Activated CD8-positive, alpha-beta T cell treated with anti-CD3 and anti-CD28 coated beads, Interleukin-2, amount 10 ng/mL, durations not matched to agents 7 days and 5 days (primary cell): ENCODE measurements at regions of chr22 and their contacts with region 1.

Region 1: DNA sequence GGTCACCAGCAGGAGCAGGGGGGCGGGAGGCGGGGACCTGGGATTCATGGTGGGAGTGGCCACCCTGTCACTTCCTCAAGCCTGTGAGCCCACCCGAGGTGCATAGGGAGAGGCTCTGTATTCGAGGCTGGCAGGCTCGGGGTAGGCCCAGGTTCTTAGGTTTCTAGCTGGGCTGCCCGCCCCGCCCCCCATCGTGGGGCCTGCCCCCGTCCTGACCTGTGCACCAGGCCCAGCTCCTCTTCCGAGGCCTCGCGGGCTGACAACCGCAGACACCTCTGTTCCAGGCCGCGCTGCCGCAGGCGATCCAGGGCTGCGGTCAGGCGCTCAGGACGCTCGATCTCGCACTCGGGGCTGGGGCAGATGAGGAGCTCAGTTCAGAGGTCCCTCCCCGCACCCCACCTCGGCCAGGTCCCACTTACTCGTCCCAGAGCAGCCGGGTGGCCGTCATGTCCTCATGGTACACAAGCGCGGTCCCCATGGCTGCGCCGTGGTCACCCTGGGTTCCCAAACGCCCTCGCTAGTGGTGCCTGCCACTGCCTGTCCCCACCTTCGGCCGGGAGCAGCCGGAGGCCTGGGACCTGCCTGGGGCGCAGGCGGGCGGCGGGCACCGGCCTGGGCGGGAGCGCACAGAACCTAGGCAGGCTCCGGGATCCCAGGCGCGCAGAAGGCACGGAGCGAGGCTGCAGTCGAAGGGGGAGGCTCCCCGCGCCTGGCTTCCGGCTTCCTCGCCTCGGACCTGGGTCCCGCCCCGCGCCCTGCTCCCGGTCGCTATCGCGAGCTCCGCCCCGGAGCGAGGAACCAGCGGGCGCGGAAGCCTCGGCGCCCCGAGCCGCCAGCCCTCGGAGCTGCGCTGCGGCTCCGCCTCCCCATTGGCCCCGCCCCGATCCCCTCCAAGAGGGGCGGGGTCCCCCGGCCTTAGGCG is at the start of gene HDAC10:
- DNase-seq: peak; percentile 91
- ATAC-seq: peak; percentile 88
- H3K4me3 Mint-ChIP-seq: peak within 1 kb of the TSS; percentile 84
- H3K27ac Mint-ChIP-seq: peak within 1 kb of the TSS; percentile 84
- H3K4me1 Mint-ChIP-seq: peaks cover 26% of the 10 kb centered on the region
- H3K27me3 Mint-ChIP-seq: no peaks in the 10 kb centered on the region
- total RNA-seq, gene HDAC10: 71.4 to 75.9 TPM

Region 2: DNA sequence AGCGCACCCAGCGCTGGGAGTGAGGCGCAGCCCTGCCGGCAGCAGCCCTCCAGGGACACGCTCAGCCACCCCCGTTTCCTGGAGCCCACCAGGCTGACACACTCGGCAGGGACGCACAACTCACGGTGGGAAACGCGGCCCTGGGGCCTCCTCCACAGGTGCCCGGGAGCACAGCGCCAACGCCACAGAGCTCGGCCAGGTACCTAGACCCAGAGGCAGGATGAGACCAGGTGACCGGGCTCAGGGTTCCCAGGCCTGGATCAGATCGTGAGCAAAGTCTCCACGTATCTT is 24.0 kb before region 1 on chr22:
- CTCF ChIA-PET with region 1: no interaction called
- POLR2A ChIA-PET with region 1: no interaction called
- DNase-seq: no peak
- ATAC-seq: no peak
- H3K4me3 Mint-ChIP-seq: no peak overlapping the region
- H3K27ac Mint-ChIP-seq: no peak overlapping the region
- H3K4me1 Mint-ChIP-seq: no peaks in the 10 kb centered on the region
- H3K27me3 Mint-ChIP-seq: no peaks in the 10 kb centered on the region

Region 3: GRCh38 chr22:50260801-50261614 is 10.2 kb after region 1 on chr22:
- CTCF ChIA-PET with region 1: interaction called, 5 read pairs
- POLR2A ChIA-PET with region 1: interaction called, 17 read pairs
- DNase-seq: peak; percentile 49
- ATAC-seq: peak; percentile 63
- H3K4me3 Mint-ChIP-seq: peak overlapping the region; percentile 49
- H3K27ac Mint-ChIP-seq: no peak overlapping the region
- H3K4me1 Mint-ChIP-seq: peaks cover 8% of the 10 kb centered on the region
- H3K27me3 Mint-ChIP-seq: peaks cover 9% of the 10 kb centered on the region

Region 4: DNA sequence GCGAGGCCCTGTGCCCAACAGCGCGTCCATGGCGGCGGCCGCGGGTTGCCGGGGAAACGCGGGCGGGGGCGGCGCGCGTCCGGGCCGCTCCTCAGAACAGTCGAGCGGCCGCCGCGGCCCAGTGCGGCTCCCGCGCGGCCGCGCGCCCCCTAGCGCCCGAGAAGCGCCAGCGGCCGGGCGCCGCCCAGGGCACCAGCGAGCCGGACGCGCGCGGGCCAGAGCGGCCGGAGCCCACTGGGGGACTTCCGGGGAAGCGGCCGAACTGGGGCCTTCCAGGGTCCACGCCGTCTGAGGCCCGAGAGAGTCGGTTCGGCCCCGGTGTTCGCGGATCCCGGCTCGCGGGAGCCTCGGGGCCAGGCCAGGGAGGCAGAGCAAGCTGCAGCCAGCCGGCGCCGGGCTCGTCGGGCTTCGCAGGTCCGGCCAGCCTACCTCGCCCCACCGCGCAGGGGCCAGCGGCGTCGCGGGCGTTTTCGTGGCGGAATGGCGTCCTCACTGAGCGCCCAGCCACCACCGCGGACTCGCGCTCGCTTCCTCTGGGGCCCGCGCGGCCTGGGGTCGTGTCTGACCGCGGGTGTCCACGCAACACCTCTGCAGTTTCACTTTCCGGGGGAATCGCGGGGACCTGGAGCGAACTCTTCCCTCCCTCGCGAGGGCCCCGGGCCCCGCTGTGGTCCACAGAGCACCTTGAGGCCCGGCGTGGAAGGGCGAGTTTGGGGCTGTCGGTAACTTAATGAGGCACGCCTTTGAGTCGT is 76.3 kb after region 1 on chr22 and contains the start of gene DENND6B:
- CTCF ChIA-PET with region 1: interaction called, 13 read pairs
- POLR2A ChIA-PET with region 1: interaction called, 3 read pairs
- DNase-seq: peak; percentile 73
- ATAC-seq: peak; percentile 97
- H3K4me3 Mint-ChIP-seq: peak within 1 kb of the TSS; percentile 78
- H3K27ac Mint-ChIP-seq: peak within 1 kb of the TSS; percentile 87
- H3K4me1 Mint-ChIP-seq: peaks cover 15% of the 10 kb centered on the region
- H3K27me3 Mint-ChIP-seq: peaks cover 26% of the 10 kb centered on the region
- total RNA-seq, gene DENND6B: 6.0 to 7.0 TPM

Region 5: DNA sequence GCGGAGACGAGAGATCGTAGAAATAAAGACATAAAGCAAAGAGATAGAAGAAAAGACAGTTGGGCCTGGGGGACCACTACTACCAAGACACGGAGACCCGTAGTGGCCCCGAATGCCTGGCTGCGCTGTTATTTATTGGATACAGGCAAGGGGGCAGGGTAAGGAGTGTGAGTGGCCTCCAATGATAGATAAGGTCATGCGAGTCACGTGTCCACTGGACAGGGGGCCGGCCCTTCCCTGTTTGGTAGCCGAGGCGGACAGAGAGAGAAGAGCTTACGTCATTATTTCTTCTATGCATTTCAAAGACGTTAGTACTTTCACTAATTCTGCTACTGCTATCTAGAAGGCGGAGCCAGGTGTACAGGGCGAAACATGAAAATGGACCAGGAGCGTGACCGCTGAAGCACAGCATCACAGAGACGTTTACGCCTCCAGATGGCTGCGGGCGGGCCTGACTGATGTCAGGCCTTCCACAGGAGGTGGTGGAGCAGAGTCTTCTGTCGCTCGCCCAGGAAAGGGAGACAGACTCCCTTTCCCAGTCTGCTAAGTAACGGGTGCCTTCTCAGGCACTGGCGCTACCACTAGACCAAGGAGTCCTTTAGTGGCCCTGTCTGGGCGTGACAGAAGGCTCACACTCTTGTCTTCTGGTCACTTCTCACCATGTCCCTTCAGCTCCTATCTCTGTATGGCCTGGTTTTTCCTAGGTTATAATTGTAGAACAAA is 117.1 kb after region 1 on chr22:
- CTCF ChIA-PET with region 1: interaction called, 16 read pairs
- POLR2A ChIA-PET with region 1: no interaction called
- DNase-seq: no peak
- ATAC-seq: no peak
- H3K4me3 Mint-ChIP-seq: no peak overlapping the region
- H3K27ac Mint-ChIP-seq: no peak overlapping the region
- H3K4me1 Mint-ChIP-seq: peaks cover 11% of the 10 kb centered on the region
- H3K27me3 Mint-ChIP-seq: no peaks in the 10 kb centered on the region